ENCODE measurements at regions of chr9 and their contacts with region 1.

Region 1: DNA sequence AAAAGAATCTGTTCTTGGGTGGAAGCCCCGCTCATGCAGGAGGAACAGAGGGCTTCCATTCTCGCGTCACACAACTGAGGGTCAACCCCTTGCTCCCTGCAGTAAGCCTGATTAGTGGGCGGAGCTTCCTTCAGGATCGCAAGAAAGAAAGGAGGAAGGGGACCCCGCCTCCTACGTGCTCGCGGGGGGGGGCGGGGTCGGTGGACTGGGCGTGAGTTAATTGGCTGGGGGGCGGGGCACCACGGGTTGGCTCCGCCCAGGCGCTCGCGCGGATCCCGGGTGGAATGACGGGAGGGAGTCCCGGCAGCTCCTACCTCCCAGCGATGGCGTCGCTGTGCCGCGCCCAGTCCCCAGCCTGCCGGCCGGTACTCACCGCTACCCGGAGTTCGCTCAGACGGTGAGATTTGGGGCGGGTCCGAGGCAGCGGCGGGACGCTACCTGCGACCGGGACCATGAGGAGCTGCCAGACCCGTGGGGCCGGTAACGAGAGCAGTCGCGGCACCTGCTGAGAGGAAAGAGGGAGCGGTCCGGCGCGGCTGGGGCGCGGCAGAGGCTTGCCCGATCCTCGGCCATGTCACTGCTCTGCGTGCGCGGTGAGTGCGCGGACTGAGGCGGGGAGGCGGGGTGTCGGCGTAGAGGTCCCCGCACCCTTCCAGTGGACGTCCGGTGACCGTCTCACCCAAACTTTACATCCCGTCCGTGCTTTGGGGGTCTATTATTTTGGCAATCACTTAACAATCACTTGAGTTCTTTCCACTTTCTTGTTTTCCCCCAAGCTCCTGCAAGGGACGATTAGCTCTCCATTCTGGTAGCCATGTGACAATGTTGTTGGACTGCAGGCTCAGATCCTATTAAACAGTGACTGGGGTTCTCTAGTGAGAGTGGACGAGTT is at the start of gene UNC13B:
- DNase-seq: peak; percentile 96
- ATAC-seq: peak; percentile 99
- total RNA-seq, gene UNC13B: 27.4 TPM

Region 2: GRCh38 chr9:35035851-35036701 is 125.9 kb before region 1 on chr9:
- intact Hi-C with region 1: no loop called
- DNase-seq: peak; percentile 82
- ATAC-seq: peak; percentile 73

Region 3: GRCh38 chr9:35116898-35117551 is 44.9 kb before region 1 on chr9:
- intact Hi-C with region 1: loop called (anchors 5 kb)
- DNase-seq: peak; percentile 94
- ATAC-seq: peak; percentile 83

Region 4: DNA sequence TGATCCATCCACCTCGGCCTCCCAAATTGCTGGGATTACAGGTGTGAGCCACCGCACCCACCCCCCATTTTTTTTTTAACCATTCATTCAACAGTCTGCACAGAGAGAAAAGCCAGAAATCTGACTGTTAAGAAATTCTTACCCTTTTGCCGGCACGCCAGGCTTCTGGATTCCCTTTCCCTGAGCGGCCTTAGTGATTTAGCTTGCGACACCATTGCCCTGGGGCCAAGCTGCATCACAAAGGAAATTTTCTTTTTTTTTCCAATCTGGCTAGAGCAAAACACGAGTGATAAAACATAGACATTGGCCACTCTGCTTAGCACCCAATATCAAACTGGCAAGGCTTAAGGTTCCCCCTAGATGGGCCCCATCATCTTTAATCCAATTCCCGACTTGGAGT is 25.1 kb before region 1 on chr9:
- intact Hi-C with region 1: loop called (anchors 2 kb)
- DNase-seq: no peak
- ATAC-seq: no peak

Region 5: GRCh38 chr9:35258676-35259474 is 96.9 kb after region 1 on chr9:
- intact Hi-C with region 1: loop called (anchors 5 kb)
- DNase-seq: peak; percentile 83
- ATAC-seq: peak; percentile 54

Region 6: GRCh38 chr9:35814841-35815543 is 653.0 kb after region 1 on chr9 and contains the start of gene HINT2:
- intact Hi-C with region 1: loop called (anchors 10 kb)
- DNase-seq: peak; percentile 98
- ATAC-seq: peak; percentile 95
- total RNA-seq, gene HINT2: 72.7 TPM

Measured in Right ventricle myocardium inferior (tissue), 1 donor.